ENCODE measurements at regions of chr15 and their contacts with region 1.

Region 1: GRCh38 chr15:70810916-70811578 is 42.9 kb downstream of the LARP6 start:
- DNase-seq: no peak
- H3K4me3 ChIP-seq: no peak overlapping the region
- H3K27ac ChIP-seq: no peak overlapping the region
- H3K4me1 ChIP-seq: no peaks in the 10 kb centered on the region
- H3K27me3 ChIP-seq: no peaks in the 10 kb centered on the region
- CTCF ChIP-seq: peak in 2 of 3 experiments; percentile 12 to 23; a peak in 2 of 4 replicates
- EP300 ChIP-seq: no peak
- POLR2A ChIP-seq: no peak
- RAD21 ChIP-seq: 0 out of 4 replicates have a peak, but pooled peaks of 1 of the 2 experiments have one; percentile 10

Region 2: DNA sequence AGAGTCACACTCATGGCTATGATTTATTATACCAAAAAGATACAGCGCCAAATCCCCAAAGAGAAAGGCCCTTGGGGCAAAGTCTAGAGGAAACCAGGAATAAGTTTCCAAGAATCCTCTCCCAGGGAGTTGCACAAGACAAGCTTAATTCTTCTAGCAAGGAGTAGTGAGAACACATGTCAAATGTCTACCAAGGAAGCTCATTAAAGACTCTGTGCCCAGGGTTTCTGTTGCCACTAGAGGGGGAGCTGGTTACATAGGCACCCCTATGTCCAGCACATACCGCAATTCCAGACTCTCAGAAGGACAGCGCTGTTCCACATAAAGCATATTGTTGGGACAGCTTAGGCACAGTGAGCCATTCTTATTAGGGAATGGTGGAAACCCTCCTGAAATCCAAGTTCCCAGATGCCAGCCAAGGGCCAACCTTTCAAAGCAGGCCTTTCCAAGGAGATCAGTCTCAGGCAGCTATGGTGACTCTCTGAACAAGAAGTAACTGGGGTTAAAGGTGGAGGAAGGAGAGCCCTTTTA is 241.9 kb before region 1 on chr15:
- CTCF ChIA-PET with region 1: interaction called, 12 read pairs
- POLR2A ChIA-PET with region 1: no interaction called
- DNase-seq: no peak
- H3K4me3 ChIP-seq: no peak overlapping the region
- H3K27ac ChIP-seq: no peak overlapping the region
- H3K4me1 ChIP-seq: peaks cover 0 to 3% (median 1%) of the 10 kb centered on the region in 4 experiments; a peak in 1 of 7 replicates
- H3K27me3 ChIP-seq: 0 out of 7 replicates have a peak, but pooled peaks cover 0 to 2% (median 0%) of the 10 kb centered on the region in 4 experiments
- CTCF ChIP-seq: peak; percentile 47 to 72 (median 70)
- EP300 ChIP-seq: no peak
- POLR2A ChIP-seq: no peak
- RAD21 ChIP-seq: peak; percentile 81 to 88

Region 3: DNA sequence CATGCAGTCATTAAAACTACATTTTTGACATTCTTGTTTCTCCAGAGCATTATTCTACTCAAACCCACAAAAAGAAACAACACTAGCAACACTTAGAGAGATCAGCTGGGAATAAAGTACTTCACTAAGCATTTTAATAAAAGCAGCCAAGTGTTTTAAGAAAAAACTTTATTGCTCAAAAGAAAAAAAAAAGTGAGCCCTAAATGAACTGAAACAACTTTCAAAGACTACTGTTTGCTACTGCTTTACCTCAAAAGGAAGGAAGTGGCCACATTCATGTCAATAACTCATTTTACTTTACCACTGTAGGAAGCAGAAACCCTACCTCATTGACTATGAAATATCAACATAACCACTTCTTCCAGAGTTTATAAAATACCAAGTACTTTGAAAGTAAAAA is 139.0 kb before region 1 on chr15:
- CTCF ChIA-PET with region 1: interaction called, 11 read pairs
- POLR2A ChIA-PET with region 1: no interaction called
- DNase-seq: no peak
- H3K4me3 ChIP-seq: no peak overlapping the region
- H3K27ac ChIP-seq: no peak overlapping the region
- H3K4me1 ChIP-seq: peaks cover 0 to 6% (median 3%) of the 10 kb centered on the region in 4 experiments; a peak in 2 of 7 replicates
- H3K27me3 ChIP-seq: no peaks in the 10 kb centered on the region
- CTCF ChIP-seq: no peak
- EP300 ChIP-seq: no peak
- POLR2A ChIP-seq: no peak
- RAD21 ChIP-seq: no peak

Region 4: DNA sequence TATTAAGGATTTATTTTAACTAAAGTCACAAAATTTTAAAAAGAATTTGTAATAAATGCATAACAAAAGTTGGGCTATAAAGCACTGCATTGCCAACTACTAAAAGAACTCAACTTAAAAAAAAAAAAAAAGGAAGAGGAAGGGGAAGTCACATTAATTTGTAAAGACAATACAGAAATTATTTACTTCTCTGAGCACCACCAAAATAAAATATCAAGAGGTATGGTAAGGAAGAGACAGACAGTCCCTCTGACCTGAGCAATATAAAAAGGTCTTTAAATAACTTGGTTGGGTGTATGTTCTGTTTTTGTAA is 131.2 kb before region 1 on chr15:
- CTCF ChIA-PET with region 1: interaction called, 43 read pairs
- POLR2A ChIA-PET with region 1: no interaction called
- DNase-seq: no peak
- H3K4me3 ChIP-seq: no peak overlapping the region
- H3K27ac ChIP-seq: no peak overlapping the region
- H3K4me1 ChIP-seq: no peaks in the 10 kb centered on the region
- H3K27me3 ChIP-seq: no peaks in the 10 kb centered on the region
- CTCF ChIP-seq: no peak
- EP300 ChIP-seq: no peak
- POLR2A ChIP-seq: no peak
- RAD21 ChIP-seq: no peak

Region 5: GRCh38 chr15:70778258-70779076 is 32.6 kb before region 1 on chr15:
- CTCF ChIA-PET with region 1: interaction called, 18 read pairs
- POLR2A ChIA-PET with region 1: no interaction called
- DNase-seq: no peak
- H3K4me3 ChIP-seq: no peak overlapping the region
- H3K27ac ChIP-seq: no peak overlapping the region
- H3K4me1 ChIP-seq: no peaks in the 10 kb centered on the region
- H3K27me3 ChIP-seq: no peaks in the 10 kb centered on the region
- CTCF ChIP-seq: no peak
- EP300 ChIP-seq: no peak
- POLR2A ChIP-seq: no peak
- RAD21 ChIP-seq: no peak

Region 6: GRCh38 chr15:70799667-70800450 is 11.2 kb before region 1 on chr15:
- CTCF ChIA-PET with region 1: interaction called, 17 read pairs
- POLR2A ChIA-PET with region 1: no interaction called
- DNase-seq: no peak
- H3K4me3 ChIP-seq: no peak overlapping the region
- H3K27ac ChIP-seq: no peak overlapping the region
- H3K4me1 ChIP-seq: no peaks in the 10 kb centered on the region
- H3K27me3 ChIP-seq: no peaks in the 10 kb centered on the region
- CTCF ChIP-seq: no peak
- EP300 ChIP-seq: no peak
- POLR2A ChIP-seq: no peak
- RAD21 ChIP-seq: no peak

Region 7: GRCh38 chr15:70826634-70827033 is 15.6 kb after region 1 on chr15:
- CTCF ChIA-PET with region 1: interaction called, 24 read pairs
- POLR2A ChIA-PET with region 1: interaction called, 3 read pairs
- DNase-seq: no peak
- H3K4me3 ChIP-seq: no peak overlapping the region
- H3K27ac ChIP-seq: no peak overlapping the region
- H3K4me1 ChIP-seq: no peaks in the 10 kb centered on the region
- H3K27me3 ChIP-seq: no peaks in the 10 kb centered on the region
- CTCF ChIP-seq: no peak
- EP300 ChIP-seq: no peak
- POLR2A ChIP-seq: no peak
- RAD21 ChIP-seq: no peak

Measured in H1 (cell line).